ENCODE measurements at regions of chr22 and their contacts with region 1.

Region 1: DNA sequence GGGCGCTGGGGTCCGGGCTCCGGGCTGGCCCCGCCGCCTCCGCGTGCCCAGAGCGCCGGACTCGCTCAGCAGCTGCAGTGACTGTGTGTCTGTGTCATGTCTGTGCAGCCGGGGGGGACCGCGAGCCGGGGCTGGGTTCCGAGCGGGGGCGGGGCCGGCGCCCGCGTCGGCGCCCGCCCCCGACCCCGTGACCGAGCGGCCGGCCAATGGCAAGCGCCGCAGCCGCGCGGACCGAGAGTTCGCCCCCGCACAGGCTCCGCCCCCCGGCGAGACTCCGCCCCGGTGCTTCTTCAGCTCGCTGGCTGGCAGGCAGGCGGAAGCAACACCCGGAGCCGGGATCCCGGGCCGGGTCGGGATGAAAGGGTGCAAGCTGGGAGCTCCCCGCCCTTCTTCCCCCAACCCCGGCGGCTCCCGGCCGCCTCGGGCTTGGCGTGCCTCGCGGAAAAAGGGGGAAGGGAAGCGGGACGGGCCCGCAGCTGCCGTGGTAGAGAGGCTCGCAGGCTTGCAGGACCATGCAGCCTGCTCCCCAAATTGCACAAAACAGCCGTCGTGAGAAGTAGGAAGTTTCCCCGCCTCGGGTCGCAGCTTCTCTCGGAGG is 750 bp upstream of the LARGE1 start:
- H3K4me3 ChIP-seq: peak overlapping the region; percentile 81
- H3K27ac ChIP-seq: peak overlapping the region; percentile 54; the same call in 1 of the 2 replicates
- H3K4me1 ChIP-seq: peaks cover 16% of the 10 kb centered on the region
- CTCF ChIP-seq: no peak

Region 2: GRCh38 chr22:33302049-33302545 is 618.9 kb before region 1 on chr22:
- CTCF ChIA-PET with region 1: interaction called, 12 read pairs
- POLR2A ChIA-PET with region 1: interaction called, 3 read pairs
- H3K4me3 ChIP-seq: no peak overlapping the region
- H3K27ac ChIP-seq: no peak overlapping the region
- H3K4me1 ChIP-seq: no peaks in the 10 kb centered on the region
- CTCF ChIP-seq: peak; percentile 75

Region 3: GRCh38 chr22:33932997-33933396 is 12.0 kb after region 1 on chr22:
- CTCF ChIA-PET with region 1: interaction called, 21 read pairs
- POLR2A ChIA-PET with region 1: interaction called, 9 read pairs
- H3K4me3 ChIP-seq: no peak overlapping the region
- H3K27ac ChIP-seq: no peak overlapping the region
- H3K4me1 ChIP-seq: no peaks in the 10 kb centered on the region
- CTCF ChIP-seq: no peak

Region 4: DNA sequence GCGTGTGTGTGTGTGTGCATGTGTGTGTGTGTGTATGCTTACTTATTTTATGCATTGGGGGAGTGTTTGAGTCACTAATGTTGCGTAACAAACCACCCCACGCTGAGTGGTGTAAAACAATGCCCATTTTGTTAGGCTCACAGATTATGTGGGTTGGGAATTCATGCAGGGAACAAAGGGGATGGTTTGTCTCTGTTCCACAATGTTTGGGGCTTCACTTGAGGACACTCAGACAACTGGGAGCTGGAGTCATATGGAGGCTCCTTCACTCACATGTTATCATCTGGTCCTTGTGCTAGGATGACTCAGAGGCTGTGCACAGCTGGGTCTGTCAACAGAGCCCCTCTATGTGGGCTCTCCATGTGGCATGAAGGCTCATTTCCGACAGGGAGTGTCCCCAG is 50.5 kb after region 1 on chr22:
- CTCF ChIA-PET with region 1: interaction called, 12 read pairs
- POLR2A ChIA-PET with region 1: no interaction called
- H3K4me3 ChIP-seq: no peak overlapping the region
- H3K27ac ChIP-seq: no peak overlapping the region
- H3K4me1 ChIP-seq: no peaks in the 10 kb centered on the region
- CTCF ChIP-seq: no peak

Region 5: GRCh38 chr22:34111210-34111824 is 190.3 kb after region 1 on chr22:
- CTCF ChIA-PET with region 1: interaction called, 52 read pairs
- POLR2A ChIA-PET with region 1: no interaction called
- H3K4me3 ChIP-seq: no peak overlapping the region
- H3K27ac ChIP-seq: no peak overlapping the region
- H3K4me1 ChIP-seq: peaks cover 4% of the 10 kb centered on the region; the same call in 1 of the 2 replicates
- CTCF ChIP-seq: no peak

Region 6: GRCh38 chr22:34243023-34243422 is 322.0 kb after region 1 on chr22:
- CTCF ChIA-PET with region 1: no interaction called
- POLR2A ChIA-PET with region 1: no interaction called
- H3K4me3 ChIP-seq: no peak overlapping the region
- H3K27ac ChIP-seq: no peak overlapping the region
- H3K4me1 ChIP-seq: no peaks in the 10 kb centered on the region
- CTCF ChIP-seq: no peak

Measured in HEK293 (cell line).